ENCODE measurements at regions of chr10 and their contacts with region 1.

Region 1: DNA sequence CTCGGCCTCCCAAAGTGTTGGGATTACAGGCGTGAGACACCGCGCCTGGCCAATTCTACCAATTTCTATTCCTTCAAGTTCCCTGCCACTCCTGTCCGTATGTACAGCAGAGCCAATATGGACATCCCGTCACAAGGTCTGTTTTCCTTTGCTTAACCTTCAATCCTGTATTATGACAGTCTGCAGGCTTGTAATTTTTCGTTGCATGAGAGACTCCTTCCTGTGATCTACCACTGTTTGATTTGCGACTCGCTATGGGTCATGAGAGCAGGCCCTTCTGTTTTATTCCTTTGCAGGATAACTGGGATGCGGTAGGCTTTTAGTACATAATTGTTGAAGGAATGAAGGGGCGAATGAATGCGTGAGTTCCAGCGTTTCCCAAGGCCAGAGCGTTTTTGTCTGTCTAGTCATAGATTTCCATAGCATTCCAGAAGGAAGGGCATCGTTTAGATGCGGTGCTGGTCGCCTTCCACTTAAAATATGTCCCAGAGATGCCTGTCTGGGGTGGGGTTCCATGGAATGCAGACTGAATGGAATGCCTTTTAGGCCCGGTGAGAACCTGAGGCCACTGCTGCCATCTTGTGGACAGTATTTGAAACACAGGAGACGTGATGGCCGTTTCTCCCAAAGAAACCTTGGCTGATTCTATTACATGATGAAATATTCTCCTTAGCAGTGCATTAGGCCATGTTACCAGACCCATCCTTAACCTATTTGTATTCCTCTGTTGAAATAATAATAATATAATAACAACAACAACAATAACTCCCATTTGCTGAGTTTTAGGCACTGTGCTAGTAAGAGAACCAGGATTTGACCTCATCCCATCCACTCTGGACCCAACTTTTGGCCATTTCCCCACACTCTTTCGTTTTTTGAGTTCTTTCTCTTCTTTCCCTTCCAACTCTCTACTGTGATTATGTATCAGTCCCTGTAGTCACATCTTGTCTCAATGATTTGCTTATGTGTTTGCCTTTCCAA is 193.2 kb downstream of the MYOF start:
- DNase-seq: peak; percentile 81 to 88
- H3K4me3 ChIP-seq: no peak overlapping the region
- H3K27ac ChIP-seq: peak overlapping the region in 1 of 3 donors; percentile 11
- H3K4me1 ChIP-seq: peaks cover 6 to 19% of the 10 kb centered on the region in 2 donors
- H3K27me3 ChIP-seq: no peaks in the 10 kb centered on the region
- CTCF ChIP-seq: peak; percentile 47 to 94 (median 82)
- POLR2A ChIP-seq: no peak

Region 2: DNA sequence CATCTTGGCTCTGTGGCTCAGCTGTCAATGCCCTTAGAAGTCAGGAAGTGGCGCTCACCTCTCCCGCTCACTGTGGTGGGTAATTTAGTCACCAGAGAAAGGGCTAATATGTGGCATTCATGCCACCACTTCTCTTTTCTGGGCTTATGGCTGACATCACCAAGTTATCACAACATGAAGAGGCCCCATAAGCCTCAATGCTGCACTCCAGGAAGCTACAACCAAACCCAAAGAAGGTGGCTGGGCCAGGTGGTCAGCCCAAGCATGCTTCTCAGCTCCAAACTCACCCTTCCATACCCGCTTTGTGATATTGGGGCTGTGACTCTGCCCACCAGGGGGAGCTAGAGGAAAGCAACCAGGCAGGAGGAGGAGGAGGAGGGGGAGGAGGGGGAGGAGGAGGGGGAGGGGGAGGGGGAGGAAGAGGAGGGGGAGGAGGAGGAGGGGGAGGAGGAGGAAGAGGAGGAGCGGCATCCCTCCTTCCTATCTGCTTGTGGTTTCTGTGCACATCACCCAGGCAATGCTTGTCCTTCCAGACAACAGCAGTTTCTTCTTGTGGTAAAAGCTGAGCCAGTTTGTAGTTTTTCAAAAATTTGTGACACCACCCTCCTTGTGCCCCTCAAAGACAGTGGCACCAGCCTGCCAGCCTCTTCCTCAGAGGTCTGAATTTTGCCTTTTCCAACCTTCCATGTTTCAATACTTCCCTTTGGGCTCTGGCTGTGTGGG is 173.1 kb before region 1 on chr10:
- intact Hi-C with region 1: loop called (anchors 5 kb)
- DNase-seq: peak; percentile 77 to 87
- H3K4me3 ChIP-seq: no peak overlapping the region
- H3K27ac ChIP-seq: no peak overlapping the region
- H3K4me1 ChIP-seq: no peaks in the 10 kb centered on the region
- H3K27me3 ChIP-seq: no peaks in the 10 kb centered on the region
- CTCF ChIP-seq: peak in 4 of 6 experiments; percentile 30 to 60 (median 54)
- POLR2A ChIP-seq: no peak

Region 3: GRCh38 chr10:93667795-93668194 is 378.9 kb after region 1 on chr10:
- intact Hi-C with region 1: no loop called
- DNase-seq: no peak
- H3K4me3 ChIP-seq: no peak overlapping the region
- H3K27ac ChIP-seq: no peak overlapping the region
- H3K4me1 ChIP-seq: no peaks in the 10 kb centered on the region
- H3K27me3 ChIP-seq: no peaks in the 10 kb centered on the region
- CTCF ChIP-seq: no peak
- POLR2A ChIP-seq: no peak

Measured in thyroid gland (tissue), 4 donors.